ENCODE measurements at regions of chr2 and their contacts with region 1.

Region 1: GRCh38 chr2:230160112-230160660 is 59.6 kb downstream of the SP110 start:
- DNase-seq: peak; percentile 47 to 48
- ATAC-seq: peak; percentile 48 to 88; a peak in 4 of 6 replicates
- H3K4me3 ChIP-seq: no peak overlapping the region
- H3K27ac ChIP-seq: no peak overlapping the region
- H3K4me1 ChIP-seq: no peaks in the 10 kb centered on the region
- CTCF ChIP-seq: peak; percentile 75
- EP300 ChIP-seq: no peak
- POLR2A ChIP-seq: no peak
- RAD21 ChIP-seq: peak; percentile 65 to 71

Region 2: DNA sequence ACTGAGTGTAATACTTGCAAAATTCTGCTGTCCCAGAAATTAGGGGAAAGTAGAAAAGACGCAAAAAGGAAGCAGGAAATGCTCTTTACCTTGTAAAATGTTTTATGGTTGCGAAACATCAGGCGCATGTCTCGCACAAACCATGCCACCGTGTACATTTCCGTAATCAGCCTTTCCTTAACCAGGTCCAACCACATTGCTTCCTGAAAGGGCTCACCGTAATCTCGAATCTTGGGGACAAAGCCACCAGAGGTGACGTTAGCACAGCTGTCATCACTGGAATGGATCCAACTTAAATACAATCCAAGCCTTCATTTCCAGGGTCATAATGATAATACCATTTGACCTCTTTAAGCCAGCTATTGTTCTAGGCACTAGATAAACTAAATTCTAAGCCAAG is 10.3 kb after region 1 on chr2:
- CTCF ChIA-PET with region 1: interaction called, 13 read pairs
- POLR2A ChIA-PET with region 1: no interaction called
- DNase-seq: no peak
- ATAC-seq: no peak
- H3K4me3 ChIP-seq: no peak overlapping the region
- H3K27ac ChIP-seq: no peak overlapping the region
- H3K4me1 ChIP-seq: no peaks in the 10 kb centered on the region
- CTCF ChIP-seq: no peak
- EP300 ChIP-seq: no peak
- POLR2A ChIP-seq: no peak
- RAD21 ChIP-seq: no peak

Measured in A549 (cell line).